CD4-positive, alpha-beta T cell (primary cell): ENCODE measurements at regions of chr6 and their contacts with region 1.

Region 1: GRCh38 chr6:44404022-44404714 is 16.7 kb downstream of the CDC5L start:
- DNase-seq: no peak
- ATAC-seq: no peak
- H3K4me3 ChIP-seq: no peak overlapping the region
- H3K4me3 Mint-ChIP-seq: no peak overlapping the region
- H3K27ac ChIP-seq: no peak overlapping the region
- H3K27ac Mint-ChIP-seq: no peak overlapping the region
- H3K4me1 ChIP-seq: no peaks in the 10 kb centered on the region
- H3K4me1 Mint-ChIP-seq: peaks cover 34% of the 10 kb centered on the region
- H3K27me3 ChIP-seq: no peaks in the 10 kb centered on the region
- H3K27me3 Mint-ChIP-seq: no peaks in the 10 kb centered on the region
- CTCF ChIP-seq: no peak

Region 2: DNA sequence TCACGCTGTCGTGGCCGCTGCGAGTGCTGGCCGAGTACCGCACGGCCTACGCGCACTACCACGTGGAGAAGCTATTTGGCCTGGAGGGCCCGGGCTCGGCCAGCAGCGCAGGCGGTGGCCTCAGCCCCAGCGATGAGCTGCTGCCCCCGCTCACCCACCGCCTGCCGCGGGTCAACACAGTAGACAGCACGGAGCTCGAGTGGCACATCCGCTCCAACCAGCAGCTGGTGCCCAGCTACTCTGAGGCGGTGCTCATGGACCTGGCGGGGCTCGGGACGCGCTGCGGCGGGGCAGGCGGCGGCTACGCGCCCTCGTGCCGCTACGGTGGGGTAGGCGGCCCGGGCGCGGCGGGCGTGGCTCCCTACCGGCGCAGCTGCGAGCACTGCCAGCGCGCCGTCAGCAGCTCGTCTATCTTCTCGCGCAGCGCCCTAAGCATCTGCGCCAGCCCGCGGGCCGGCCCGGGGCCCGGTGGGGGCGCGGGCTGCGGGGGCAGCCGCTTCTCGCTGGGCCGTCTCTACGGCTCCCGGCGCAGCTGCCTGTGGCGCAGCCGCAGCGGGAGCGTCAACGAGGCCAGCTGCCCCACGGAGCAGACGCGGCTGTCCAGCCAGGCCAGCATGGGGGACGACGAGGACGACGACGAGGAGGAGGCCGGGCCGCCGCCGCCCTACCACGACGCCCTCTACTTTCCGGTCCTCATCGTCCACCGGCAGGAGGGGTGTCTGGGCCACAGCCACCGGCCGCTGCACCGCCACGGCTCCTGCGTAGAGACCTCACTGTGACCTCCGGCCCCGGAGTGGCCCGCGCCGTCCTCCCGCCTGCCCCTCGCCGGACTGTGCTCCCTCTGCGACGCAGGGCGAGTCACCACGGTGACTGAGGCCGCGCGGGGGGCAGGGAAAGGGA is 128.2 kb before region 1 on chr6:
- CTCF ChIA-PET with region 1: no interaction called
- POLR2A ChIA-PET with region 1: no interaction called
- intact Hi-C with region 1: no loop called
- DNase-seq: peak in 5 of 14 experiments; percentile 12 to 67 (median 32)
- ATAC-seq: peak; percentile 82
- H3K4me3 ChIP-seq: no peak overlapping the region
- H3K4me3 Mint-ChIP-seq: no peak overlapping the region
- H3K27ac ChIP-seq: no peak overlapping the region
- H3K27ac Mint-ChIP-seq: no peak overlapping the region
- H3K4me1 ChIP-seq: peaks cover 16% of the 10 kb centered on the region
- H3K4me1 Mint-ChIP-seq: peaks cover 5% of the 10 kb centered on the region
- H3K27me3 ChIP-seq: peaks cover 59 to 70% of the 10 kb centered on the region in 2 experiments
- H3K27me3 Mint-ChIP-seq: peaks cover 73% of the 10 kb centered on the region
- CTCF ChIP-seq: no peak

Region 3: DNA sequence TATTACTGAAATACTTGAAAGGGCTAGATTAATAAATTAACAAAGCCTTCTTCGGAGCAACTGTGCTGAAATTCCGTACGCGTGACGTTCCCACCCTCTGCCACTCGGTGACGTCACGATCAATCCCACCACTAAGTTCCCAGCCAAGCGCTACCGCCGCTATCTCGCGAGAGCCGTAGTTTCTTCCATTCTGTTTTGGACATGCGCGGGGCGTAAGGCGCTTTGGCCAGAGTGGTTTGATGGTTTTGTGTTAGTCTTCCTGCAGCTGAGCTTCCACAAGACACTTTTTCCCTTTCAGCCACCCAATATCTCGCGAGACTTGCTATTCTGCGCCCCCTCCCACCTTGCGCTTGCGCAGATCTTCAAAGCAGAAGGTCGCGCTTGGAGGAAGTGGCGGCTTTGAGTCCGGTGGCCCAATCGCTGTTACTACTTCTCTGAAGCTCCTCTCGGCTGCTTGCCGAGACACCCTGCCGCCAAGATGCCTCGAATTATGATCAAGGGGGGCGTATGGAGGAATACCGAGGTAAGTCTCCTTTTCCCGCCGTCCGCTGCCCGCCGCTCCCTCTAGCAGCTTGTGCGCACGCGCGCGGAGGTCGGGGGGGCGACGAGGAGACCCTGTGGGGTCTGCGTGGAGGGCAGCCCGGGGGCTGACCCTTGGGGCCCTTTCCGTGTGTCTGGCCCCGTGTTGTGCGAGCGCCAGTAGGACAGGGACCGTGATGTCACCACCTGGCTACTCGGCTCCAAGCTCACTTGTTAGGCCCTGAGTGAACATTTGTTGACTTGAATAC is 16.6 kb before region 1 on chr6 and contains the start of gene CDC5L:
- CTCF ChIA-PET with region 1: no interaction called
- POLR2A ChIA-PET with region 1: interaction called, 10 read pairs
- intact Hi-C with region 1: no loop called
- DNase-seq: peak; percentile 74 to 98 (median 86)
- ATAC-seq: peak; percentile 81
- H3K4me3 ChIP-seq: peak within 1 kb of the TSS; percentile 84
- H3K4me3 Mint-ChIP-seq: peak within 1 kb of the TSS; percentile 97
- H3K27ac ChIP-seq: peak within 1 kb of the TSS; percentile 89 to 93
- H3K27ac Mint-ChIP-seq: peak within 1 kb of the TSS; percentile 93
- H3K4me1 ChIP-seq: peaks cover 19% of the 10 kb centered on the region
- H3K4me1 Mint-ChIP-seq: peaks cover 40% of the 10 kb centered on the region
- H3K27me3 ChIP-seq: no peaks in the 10 kb centered on the region
- H3K27me3 Mint-ChIP-seq: no peaks in the 10 kb centered on the region
- CTCF ChIP-seq: no peak
- total RNA-seq, gene CDC5L: 18.9 to 19.9 TPM

Region 4: DNA sequence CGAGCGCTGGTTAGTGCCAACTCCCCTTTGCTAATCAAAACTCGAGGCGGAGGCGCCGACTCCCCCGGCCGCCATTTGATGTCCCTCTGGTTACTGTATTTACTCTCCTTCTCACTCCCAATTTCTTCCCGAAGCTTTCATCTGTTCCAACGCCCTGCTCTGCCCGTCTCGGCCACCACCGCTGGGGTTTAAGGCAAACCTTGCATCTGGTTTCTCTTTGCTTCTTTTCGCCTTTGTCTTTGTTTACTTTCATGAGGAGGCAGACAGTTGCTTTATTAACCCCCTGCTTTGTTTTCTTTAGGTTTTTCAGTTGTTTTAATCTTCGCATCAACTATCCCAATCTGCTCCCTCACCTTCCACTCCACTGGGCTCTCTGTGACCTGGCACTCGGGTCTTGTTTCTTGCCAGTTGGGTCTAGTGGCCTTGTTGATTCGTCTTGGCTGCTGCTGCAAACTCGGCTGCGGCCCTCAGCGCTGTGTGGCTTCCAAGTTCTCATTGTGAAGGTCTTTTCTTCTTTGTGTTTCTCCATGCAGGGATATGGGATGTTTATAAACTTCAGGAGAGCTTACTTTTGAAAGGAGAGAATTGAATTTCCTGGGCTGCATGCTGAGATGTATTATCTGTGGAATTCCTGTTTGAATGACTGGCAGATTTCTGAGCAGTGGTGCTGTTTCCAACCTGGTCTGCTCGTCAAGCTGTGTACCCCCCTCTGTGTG is 138.4 kb after region 1 on chr6:
- CTCF ChIA-PET with region 1: no interaction called
- POLR2A ChIA-PET with region 1: no interaction called
- intact Hi-C with region 1: no loop called
- DNase-seq: no peak
- ATAC-seq: no peak
- H3K4me3 ChIP-seq: no peak overlapping the region
- H3K4me3 Mint-ChIP-seq: no peak overlapping the region
- H3K27ac ChIP-seq: no peak overlapping the region
- H3K27ac Mint-ChIP-seq: no peak overlapping the region
- H3K4me1 ChIP-seq: no peaks in the 10 kb centered on the region
- H3K4me1 Mint-ChIP-seq: no peaks in the 10 kb centered on the region
- H3K27me3 ChIP-seq: no peaks in the 10 kb centered on the region
- H3K27me3 Mint-ChIP-seq: no peaks in the 10 kb centered on the region
- CTCF ChIP-seq: no peak

Region 5: DNA sequence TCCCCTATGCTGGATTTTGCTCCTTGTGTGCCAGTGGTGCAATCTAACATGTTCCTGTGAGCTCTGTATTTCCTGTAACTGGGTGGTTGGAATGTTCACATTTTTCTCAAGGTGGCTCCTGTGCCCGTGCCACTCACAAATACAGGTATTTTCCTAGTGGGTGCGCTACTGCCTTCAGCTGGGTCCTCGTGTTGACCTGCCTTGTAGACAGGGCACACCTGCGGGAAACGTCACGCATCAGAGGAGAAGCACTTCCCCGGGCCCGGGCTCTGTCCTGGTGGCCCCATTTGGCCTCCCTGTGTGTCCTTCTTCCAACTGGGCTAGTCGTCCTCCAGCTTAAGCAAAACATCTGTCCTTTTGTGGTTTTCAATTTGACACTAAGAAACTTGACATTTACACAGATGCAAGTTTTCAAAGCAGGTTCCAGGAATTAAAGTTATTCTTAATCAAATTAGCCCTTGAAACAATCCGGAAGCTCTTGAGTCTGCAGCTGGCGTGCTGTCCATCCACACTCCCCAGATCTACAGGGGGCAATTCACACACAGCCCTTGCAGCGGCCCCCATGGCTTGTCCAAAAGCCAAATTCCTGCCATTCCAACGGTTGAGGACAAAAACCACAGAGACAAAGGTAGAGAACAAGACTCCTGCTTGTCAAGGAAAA is 258.4 kb after region 1 on chr6:
- CTCF ChIA-PET with region 1: no interaction called
- POLR2A ChIA-PET with region 1: no interaction called
- intact Hi-C with region 1: no loop called
- DNase-seq: no peak
- ATAC-seq: no peak
- H3K4me3 ChIP-seq: no peak overlapping the region
- H3K4me3 Mint-ChIP-seq: no peak overlapping the region
- H3K27ac ChIP-seq: no peak overlapping the region
- H3K27ac Mint-ChIP-seq: no peak overlapping the region
- H3K4me1 ChIP-seq: no peaks in the 10 kb centered on the region
- H3K4me1 Mint-ChIP-seq: no peaks in the 10 kb centered on the region
- H3K27me3 ChIP-seq: no peaks in the 10 kb centered on the region
- H3K27me3 Mint-ChIP-seq: no peaks in the 10 kb centered on the region
- CTCF ChIP-seq: no peak